Mammary epithelial cell (primary cell): ENCODE measurements at regions of chr16 and their contacts with region 1.

Region 1: GRCh38 chr16:81500833-81501521 is 56.4 kb downstream of the CMIP start:
- DNase-seq: peak; percentile 95
- H3K4me3 ChIP-seq: peak overlapping the region in 1 of 3 experiments; percentile 30
- H3K27ac ChIP-seq: peak overlapping the region; percentile 84
- H3K4me1 ChIP-seq: peaks cover 71% of the 10 kb centered on the region
- H3K27me3 ChIP-seq: no peaks in the 10 kb centered on the region
- CTCF ChIP-seq: no peak

Region 2: DNA sequence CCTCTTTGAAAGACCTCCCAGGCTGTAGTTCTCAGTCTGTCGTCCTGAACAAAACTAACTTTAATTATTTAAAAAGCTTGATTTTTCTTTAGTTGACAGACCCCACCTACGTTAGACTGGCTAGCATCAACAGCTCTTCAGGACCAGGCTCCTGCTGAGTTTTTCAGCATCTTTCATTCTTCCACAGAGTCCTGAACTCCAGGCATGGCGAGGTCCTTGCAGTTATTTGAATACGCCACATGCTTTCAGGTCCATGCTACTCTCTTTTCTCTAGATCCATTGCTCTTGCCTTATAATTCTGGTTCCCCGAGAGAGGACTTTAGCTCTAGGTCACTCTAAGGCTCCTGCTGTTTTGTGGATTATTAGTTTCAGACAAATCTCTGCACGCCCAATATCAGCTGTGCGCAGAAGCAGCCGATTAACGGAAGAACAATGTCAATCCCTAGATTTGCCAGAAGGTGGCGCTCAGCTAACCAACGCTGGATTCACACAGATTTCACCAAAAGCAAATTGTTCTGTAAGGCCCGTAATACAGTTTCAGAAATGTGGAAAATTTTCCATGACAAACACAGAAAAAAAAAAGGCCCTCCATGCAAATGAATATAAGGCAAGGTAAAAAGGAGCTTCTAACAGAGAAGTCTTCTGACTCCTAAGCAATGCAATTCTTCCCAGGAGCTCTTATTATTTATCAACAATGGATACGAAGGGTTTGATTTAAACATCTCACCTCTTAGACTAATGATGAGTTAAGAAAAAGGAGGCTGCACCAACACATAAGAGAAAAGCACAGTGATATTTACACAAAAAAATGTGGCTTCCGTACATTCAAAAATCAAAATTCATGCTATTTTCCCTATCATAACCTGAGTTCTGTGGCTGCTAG is 295.9 kb before region 1 on chr16:
- CTCF ChIA-PET with region 1: no interaction called
- dilution Hi-C with region 1: no loop called
- in situ Hi-C with region 1: no loop called
- intact Hi-C with region 1: no loop called
- DNase-seq: peak; percentile 36
- H3K4me3 ChIP-seq: no peak overlapping the region
- H3K27ac ChIP-seq: no peak overlapping the region
- H3K4me1 ChIP-seq: no peaks in the 10 kb centered on the region
- H3K27me3 ChIP-seq: peaks cover 3% of the 10 kb centered on the region
- CTCF ChIP-seq: peak; percentile 61 to 73

Region 3: GRCh38 chr16:81723098-81723723 is 222.2 kb after region 1 on chr16:
- CTCF ChIA-PET with region 1: no interaction called
- dilution Hi-C with region 1: no loop called
- in situ Hi-C with region 1: no loop called
- intact Hi-C with region 1: loop called (anchors 5 kb)
- DNase-seq: peak; percentile 73
- H3K4me3 ChIP-seq: no peak overlapping the region
- H3K27ac ChIP-seq: no peak overlapping the region
- H3K4me1 ChIP-seq: peaks cover 8% of the 10 kb centered on the region
- H3K27me3 ChIP-seq: no peaks in the 10 kb centered on the region
- CTCF ChIP-seq: peak; percentile 50 to 66